Posterior vena cava (tissue), 2 donors: ENCODE measurements at regions of chr22 and their contacts with region 1.

Region 1: DNA sequence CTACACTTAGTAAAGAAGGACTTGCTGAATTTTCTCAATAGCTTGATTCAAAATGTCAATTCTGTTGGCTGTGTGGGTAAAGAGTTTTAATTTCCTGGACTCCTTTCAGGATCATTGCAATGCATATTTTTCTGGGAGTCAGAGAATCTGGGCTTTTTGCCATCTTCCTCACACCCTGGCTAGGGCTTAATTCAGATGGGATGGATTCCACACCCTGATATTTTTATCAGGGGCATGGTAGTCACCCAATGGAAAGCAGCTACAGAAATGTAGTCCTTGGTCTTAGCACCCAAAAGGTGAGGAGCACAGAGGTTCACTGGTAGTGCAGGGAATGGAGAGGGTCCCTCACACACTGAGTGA is 79.3 kb downstream of the SGSM3 start:
- DNase-seq: no peak

Region 2: DNA sequence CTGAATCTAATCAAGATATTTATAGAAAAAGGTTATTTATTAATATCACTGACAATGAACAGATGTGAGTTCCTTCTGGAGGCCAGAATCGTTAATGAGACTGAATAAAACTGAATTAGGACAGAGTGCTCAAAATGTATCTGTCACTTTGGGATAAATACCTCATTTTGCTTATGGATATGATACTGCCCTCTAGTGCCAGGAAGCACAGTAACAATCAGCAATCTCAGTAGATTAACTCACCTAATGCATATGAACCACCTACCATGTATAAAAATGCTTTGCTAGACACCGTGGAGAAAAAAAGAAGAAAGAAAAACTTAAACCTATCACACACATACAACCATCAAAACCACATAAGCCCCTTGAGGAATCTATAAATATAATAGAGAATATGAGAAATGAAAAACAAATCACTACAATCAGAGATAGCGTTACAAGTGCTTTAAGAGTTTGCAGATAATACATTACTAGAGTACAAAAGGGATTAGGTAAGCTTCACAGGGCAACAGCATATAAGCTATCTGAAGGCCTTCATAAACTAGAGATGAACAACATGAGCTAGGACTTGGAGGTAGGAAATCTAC is 38.1 kb after region 1 on chr22:
- intact Hi-C with region 1: loop called in 1 of 2 experiments (anchors 5 kb)
- DNase-seq: no peak

Region 3: GRCh38 chr22:40547729-40548172 is 98.1 kb after region 1 on chr22:
- intact Hi-C with region 1: loop called in 1 of 2 experiments (anchors 5 kb)
- DNase-seq: no peak

Region 4: DNA sequence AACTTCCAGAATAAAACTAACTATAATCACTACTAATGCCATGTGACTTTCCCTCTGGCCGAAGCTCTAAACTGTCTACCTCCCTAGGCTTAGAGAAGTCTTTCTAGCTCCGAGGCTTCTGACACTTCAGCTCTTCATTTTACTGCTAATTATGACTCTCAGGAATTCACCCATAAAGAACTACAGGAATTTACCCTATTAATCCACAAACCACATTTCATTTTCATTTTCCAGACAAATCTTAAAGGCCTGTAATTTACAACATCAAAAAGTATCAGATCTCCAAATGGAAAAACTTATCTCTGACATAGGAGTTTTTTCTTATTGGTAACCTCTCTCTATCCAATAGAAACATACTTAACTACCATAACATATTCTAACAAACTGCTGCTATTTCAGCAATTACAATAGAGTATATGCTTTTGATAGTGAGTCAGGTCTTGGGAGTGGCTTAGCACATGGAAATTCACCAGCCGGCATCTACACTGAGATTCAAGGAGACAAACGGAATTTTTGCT is 153.5 kb after region 1 on chr22:
- intact Hi-C with region 1: no loop called
- DNase-seq: no peak